Posterior vena cava (tissue), 2 donors: ENCODE measurements at regions of chr6 and their contacts with region 1.

Region 1: GRCh38 chr6:166097915-166098522 is 69.6 kb downstream of the TBXT start:
- DNase-seq: peak; percentile 91

Region 2: DNA sequence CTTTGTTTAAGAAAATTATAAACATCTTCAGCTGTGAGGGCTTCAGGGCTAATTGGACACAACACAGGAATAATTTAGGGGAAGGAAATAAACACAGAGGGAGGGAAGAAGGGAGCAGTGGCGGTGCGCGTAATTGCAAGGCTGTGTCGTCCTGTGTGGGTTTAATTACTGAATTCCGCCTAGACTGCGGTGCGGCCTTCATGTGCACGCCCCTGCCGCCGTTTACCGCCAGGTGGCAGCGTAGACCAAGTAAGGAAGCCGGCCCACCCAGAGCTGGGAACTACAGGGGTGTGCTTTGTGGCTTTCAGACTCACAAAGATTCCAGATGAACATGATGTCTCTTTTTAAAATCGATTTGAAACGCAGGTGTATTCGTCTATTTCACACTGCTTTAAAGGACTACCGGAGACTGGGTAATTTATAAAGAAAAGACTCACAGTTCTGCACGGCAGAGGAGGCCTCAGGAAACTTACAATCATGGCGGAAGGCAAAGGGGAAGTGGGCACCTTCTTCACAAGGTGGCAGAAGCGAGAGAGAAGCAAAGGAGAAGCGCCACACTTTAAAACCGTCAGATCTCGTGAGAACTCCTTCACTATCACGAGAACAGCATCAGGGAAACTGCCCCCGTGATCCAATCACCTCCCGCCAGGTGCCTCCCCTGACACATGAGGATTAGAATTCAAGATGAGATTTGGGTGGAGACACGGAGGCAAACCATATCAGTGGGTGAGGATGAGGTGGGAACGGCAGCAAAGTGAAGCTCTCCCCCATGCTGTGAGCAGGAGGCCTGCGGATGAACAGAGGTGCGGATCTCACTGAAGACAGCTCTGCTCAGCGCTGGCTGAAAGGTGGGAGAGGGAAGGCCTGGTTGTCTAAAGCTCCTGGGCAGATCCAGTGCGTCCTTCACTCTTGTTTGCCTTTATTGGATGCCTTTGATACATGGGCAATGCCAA is 212.9 kb before region 1 on chr6:
- intact Hi-C with region 1: loop called in 1 of 2 experiments (anchors 5 kb)
- DNase-seq: peak; percentile 90

Region 3: DNA sequence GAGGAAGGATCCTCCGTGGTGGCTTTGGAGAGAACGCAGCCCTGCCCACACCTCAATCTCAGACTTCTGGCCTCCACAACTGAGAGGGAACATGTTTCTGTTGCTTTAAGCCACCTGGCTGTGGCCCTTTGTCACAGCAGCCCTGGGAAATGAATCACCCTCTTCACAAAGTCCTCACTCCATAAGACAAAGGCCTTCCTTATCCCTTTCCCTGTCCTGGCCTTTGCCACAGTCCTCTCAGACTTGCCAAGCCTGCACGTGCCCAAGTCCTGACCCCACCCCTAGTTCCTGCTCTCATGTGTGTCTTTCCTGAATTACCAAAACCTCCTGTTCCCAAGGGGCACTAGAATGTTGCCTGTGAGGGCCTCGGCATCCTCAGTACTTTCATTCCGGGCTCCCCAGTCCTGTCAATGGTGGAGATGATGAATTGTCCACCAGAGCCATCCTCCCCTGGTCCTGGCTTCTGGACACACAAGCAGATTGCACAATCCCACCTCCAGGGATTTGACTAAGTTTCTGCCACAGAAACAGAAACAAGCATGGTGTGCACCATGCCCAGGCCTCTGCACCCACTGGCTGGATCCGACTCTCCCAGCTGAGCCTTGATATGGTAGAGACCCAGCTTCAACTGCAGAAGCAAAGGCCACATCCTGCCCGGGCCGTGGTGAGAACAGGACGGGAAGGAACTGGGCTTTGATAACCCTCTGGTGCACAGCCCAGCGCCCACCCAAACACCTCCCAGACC is 202.4 kb before region 1 on chr6:
- intact Hi-C with region 1: loop called in 1 of 2 experiments (anchors 5 kb)
- DNase-seq: no peak